Motor neuron (in vitro differentiated cells): ENCODE measurements at regions of chr12 and their contacts with region 1.

Region 1: GRCh38 chr12:12376646-12377448 is 20.0 kb downstream of the BORCS5 start:
- ATAC-seq: peak; percentile 42 to 89 (median 68)
- H3K4me3 ChIP-seq: no peak overlapping the region
- H3K27ac ChIP-seq: no peak overlapping the region
- H3K4me1 ChIP-seq: peaks cover 0 to 2% of the 10 kb centered on the region in 2 donors

Region 2: GRCh38 chr12:12527820-12528296 is 151.0 kb after region 1 on chr12:
- in situ Hi-C with region 1: no loop called
- ATAC-seq: no peak
- H3K4me3 ChIP-seq: no peak overlapping the region
- H3K27ac ChIP-seq: no peak overlapping the region
- H3K4me1 ChIP-seq: no peaks in the 10 kb centered on the region

Region 3: GRCh38 chr12:12562585-12563261 is 185.9 kb after region 1 on chr12 and contains the start of gene DUSP16:
- in situ Hi-C with region 1: loop called in 1 of 9 experiments (anchors 25 kb)
- ATAC-seq: peak; percentile 90 to 97 (median 95)
- H3K4me3 ChIP-seq: peak within 1 kb of the TSS; percentile 73 to 100 (median 93)
- H3K27ac ChIP-seq: peak within 1 kb of the TSS; percentile 79 to 93
- H3K4me1 ChIP-seq: peaks cover 16 to 21% of the 10 kb centered on the region in 2 donors
- total RNA-seq, gene DUSP16: 5.3 to 33.9 (median 25.0) TPM

Region 4: DNA sequence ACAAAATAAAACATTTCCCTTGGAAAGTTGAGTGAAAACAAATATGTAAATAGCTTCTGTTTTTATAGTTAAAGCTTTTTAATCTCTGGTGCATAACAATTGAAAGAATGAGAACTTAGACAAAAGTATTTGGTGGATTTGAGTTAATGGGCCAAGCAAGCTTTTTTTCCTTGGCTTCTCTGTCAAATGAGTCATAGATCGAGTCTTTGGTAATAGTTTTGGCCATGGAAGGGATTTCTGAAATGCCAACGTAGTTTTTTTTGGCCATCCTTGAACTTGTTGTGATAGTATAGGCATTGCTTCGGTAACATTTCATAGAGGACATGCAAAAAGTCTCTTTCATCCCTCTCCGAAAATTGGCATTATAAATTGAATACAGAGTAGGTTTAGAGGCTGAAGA is 284.2 kb after region 1 on chr12:
- in situ Hi-C with region 1: loop called in 1 of 9 experiments (anchors 25 kb)
- ATAC-seq: no peak
- H3K4me3 ChIP-seq: no peak overlapping the region
- H3K27ac ChIP-seq: peak overlapping the region in 1 of 2 donors; percentile 53
- H3K4me1 ChIP-seq: peaks cover 5 to 26% of the 10 kb centered on the region in 2 donors

Region 5: GRCh38 chr12:12696562-12697383 is 319.9 kb after region 1 on chr12:
- in situ Hi-C with region 1: loop called in 8 of 9 experiments (anchors 10 to 25 kb)
- ATAC-seq: peak; percentile 89 to 98 (median 95)
- H3K4me3 ChIP-seq: peak overlapping the region; percentile 53 to 91 (median 84)
- H3K27ac ChIP-seq: peak overlapping the region; percentile 93
- H3K4me1 ChIP-seq: peaks cover 5 to 6% of the 10 kb centered on the region in 2 donors

Region 6: GRCh38 chr12:12704593-12705230 is 327.9 kb after region 1 on chr12:
- in situ Hi-C with region 1: loop called in 8 of 9 experiments (anchors 10 to 25 kb)
- ATAC-seq: peak; percentile 93 to 100 (median 100)
- H3K4me3 ChIP-seq: no peak overlapping the region
- H3K27ac ChIP-seq: no peak overlapping the region
- H3K4me1 ChIP-seq: no peaks in the 10 kb centered on the region

Region 7: GRCh38 chr12:12724661-12725545 is 348.1 kb after region 1 on chr12:
- in situ Hi-C with region 1: loop called in 3 of 9 experiments (anchors 25 kb)
- ATAC-seq: peak; percentile 76 to 82 (median 78)
- H3K4me3 ChIP-seq: peak overlapping the region; percentile 57 to 77 (median 63)
- H3K27ac ChIP-seq: peak overlapping the region; percentile 92 to 95
- H3K4me1 ChIP-seq: peaks cover 0 to 2% of the 10 kb centered on the region in 2 donors